K562 (cell line): ENCODE measurements at regions of chr6 and their contacts with region 1.

Region 1: DNA sequence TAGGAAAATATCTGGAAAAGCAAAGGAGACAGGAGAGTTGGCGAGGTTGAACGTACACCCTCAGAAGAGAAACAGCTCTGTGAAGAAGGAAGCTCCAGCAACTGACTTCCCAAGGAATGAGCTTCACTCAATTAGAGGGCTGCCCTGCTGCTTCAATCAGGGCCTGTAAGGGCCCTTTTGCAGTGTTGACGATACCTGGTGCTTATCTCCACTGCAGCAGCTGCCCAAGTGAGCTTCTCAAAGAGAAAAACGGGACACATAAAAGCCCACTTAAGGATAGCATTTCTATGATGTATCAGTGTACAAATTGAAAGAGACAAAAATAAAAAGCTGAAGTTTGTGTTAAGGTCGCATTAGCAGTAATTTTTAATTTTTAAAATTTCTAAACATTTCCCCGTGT is 16.4 kb downstream of the SEC63 start:
- DNase-seq: peak in 3 of 4 experiments; percentile 22 to 74 (median 68)
- ATAC-seq: peak; percentile 89
- H3K4me3 ChIP-seq: no peak overlapping the region
- H3K27ac ChIP-seq: no peak overlapping the region
- H3K4me1 ChIP-seq: peaks cover 3 to 17% of the 10 kb centered on the region in 2 experiments; a peak in 2 of 5 replicates
- H3K27me3 ChIP-seq: no peaks in the 10 kb centered on the region
- CTCF ChIP-seq: no peak
- EP300 ChIP-seq: peak; percentile 32; the same call in 1 of the 2 replicates
- POLR2A ChIP-seq: no peak
- RAD21 ChIP-seq: no peak

Region 2: DNA sequence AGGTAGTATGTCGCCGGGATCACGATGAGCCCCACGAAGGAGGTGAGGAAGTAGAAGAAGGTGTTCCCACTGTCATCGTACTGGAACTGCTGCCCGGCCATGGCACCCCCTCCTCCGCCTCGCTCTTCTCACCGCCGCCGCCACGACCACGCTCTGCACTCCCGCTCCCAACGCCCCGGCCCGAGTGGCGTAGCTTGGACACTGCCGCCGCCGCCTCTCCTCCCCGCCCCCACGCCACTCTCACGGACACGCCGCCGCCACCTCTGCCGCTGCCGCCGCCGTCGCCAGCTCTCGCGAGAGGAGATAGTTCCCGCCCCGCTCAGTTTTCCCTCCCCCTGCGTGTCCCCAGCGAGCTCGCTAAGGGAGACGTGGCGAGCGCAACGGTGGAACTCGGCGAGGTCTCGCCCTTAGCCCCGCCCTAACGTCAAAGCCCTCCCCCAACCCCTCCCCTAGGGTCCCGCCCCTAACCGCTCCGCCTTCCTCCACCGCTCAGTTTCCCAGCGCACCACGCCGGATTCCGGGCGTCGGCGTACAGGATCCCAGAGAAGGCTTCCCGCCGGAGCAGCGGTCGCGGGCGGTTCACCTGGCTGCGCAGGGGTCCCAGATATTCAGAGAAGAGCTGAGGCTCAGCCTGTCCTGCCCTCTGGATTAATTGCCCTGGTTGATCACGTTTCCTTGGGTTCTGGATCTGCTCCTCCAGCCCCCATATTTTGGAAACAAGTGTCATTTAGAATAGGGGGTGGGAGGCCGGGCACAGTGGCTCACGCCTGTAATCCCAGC is 16.5 kb after region 1 on chr6 and contains the start of gene SEC63:
- CTCF ChIA-PET with region 1: no interaction called
- POLR2A ChIA-PET with region 1: interaction called, 32 read pairs
- in situ Hi-C with region 1: no loop called
- intact Hi-C with region 1: no loop called
- DNase-seq: peak; percentile 95 to 97 (median 96)
- ATAC-seq: peak; percentile 92
- H3K4me3 ChIP-seq: peak within 1 kb of the TSS; percentile 94
- H3K27ac ChIP-seq: peak within 1 kb of the TSS; percentile 95
- H3K4me1 ChIP-seq: peaks cover 12 to 20% of the 10 kb centered on the region in 2 experiments; a peak in 4 of 5 replicates
- H3K27me3 ChIP-seq: no peaks in the 10 kb centered on the region
- CTCF ChIP-seq: no peak
- EP300 ChIP-seq: no peak
- POLR2A ChIP-seq: peak; percentile 90
- RAD21 ChIP-seq: no peak
- polyA plus RNA-seq, gene SEC63: 21.2 to 25.7 TPM